ENCODE measurements at regions of chr11 and their contacts with region 1.

Region 1: DNA sequence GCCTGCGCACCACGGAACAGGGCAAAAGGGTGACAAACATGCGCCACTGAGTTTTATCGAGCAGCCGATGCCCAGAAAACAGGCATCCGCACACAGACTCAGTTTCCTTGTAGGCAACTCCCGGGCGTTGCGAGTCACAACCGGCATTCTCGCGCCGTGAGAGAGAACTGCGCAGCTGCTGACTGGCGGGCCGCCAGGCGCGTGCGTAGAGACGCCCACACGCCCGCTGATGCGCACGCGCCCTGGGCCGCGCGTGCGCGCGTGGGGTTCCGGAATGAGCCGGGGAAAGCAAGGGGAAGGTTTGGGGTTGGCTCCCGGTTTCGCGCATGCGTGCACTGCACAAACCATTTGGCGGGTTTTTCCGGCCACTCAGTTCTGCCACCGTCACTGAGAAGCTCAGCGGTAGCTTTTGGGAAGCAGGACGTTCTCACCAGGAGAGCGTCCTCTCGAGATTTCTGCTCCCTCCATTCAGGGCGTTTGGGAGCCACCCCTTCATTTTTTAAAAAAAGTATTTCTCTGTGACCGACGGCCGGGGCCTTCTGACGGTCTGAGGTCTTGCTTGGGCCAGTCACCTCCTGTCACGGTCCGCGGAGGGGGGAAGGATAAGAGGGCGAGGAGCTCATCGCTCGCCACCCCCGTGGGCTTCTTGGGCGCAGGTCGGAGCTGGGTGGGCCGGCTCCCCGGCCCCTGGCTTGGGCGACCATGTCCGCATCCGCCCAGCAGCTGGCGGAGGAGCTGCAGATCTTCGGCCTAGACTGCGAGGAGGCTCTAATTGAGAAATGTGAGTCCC is at the start of gene POLA2:
- DNase-seq: peak; percentile 79 to 93 (median 89)
- H3K4me3 ChIP-seq: peak within 1 kb of the TSS; percentile 52 to 98 (median 82)
- H3K27ac ChIP-seq: peak within 1 kb of the TSS; percentile 68 to 99 (median 92)
- H3K27me3 ChIP-seq: no peaks in the 10 kb centered on the region
- CTCF ChIP-seq: peak in 24 of 56 donors; percentile 0 to 52 (median 22)
- total RNA-seq, gene POLA2: 4.5 to 16.1 (median 8.9) TPM

Region 2: GRCh38 chr11:65321828-65322485 is 60.2 kb after region 1 on chr11:
- intact Hi-C with region 1: loop called in 1 of 2 experiments (anchors 5 kb)
- DNase-seq: no peak
- H3K4me3 ChIP-seq: no peak overlapping the region
- H3K27ac ChIP-seq: peak overlapping the region in 18 of 59 donors; percentile 3 to 57 (median 24)
- H3K27me3 ChIP-seq: no peaks in the 10 kb centered on the region
- CTCF ChIP-seq: no peak